PC-9 (cell line): ENCODE measurements at regions of chr1 and their contacts with region 1.

Region 1: GRCh38 chr1:217124408-217124807 is 401.2 kb upstream of the ESRRG start:
- DNase-seq: no peak
- H3K4me3 ChIP-seq: no peak overlapping the region
- H3K27ac ChIP-seq: no peak overlapping the region
- H3K4me1 ChIP-seq: no peaks in the 10 kb centered on the region
- H3K27me3 ChIP-seq: no peaks in the 10 kb centered on the region
- CTCF ChIP-seq: no peak

Region 2: DNA sequence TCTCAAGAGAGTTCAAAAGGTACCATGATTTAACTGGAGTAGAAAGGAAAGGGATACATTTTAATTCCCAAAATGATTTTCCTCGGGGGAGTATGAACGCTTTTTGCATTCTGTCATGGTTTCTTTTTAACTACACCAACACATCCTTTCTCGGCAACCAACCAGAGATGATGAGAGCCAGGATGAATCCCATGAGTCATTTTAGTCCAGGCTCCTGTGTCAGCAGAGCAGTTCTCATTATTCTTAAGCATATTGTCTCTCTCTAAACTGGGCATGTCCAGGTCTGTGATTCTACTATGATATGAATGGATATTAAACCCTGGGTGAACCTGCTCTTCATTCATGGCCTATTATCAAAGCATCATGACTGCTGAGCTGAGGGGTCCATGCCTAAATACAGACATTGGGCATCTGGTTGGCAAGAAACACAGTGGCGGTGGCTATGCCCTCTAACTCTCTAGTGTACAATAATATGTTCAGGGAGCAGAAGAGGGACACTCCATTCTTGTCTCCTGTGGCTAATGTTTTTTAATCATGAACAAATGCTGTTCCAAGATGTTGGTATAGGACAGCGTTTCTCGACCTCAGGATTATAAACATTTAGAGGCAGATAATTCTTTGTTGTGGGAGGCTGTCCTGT is 276.9 kb before region 1 on chr1:
- CTCF ChIA-PET with region 1: no interaction called
- POLR2A ChIA-PET with region 1: interaction called, 21 read pairs
- intact Hi-C with region 1: no loop called
- DNase-seq: no peak
- H3K4me3 ChIP-seq: no peak overlapping the region
- H3K27ac ChIP-seq: no peak overlapping the region
- H3K4me1 ChIP-seq: no peaks in the 10 kb centered on the region
- H3K27me3 ChIP-seq: no peaks in the 10 kb centered on the region
- CTCF ChIP-seq: no peak

Region 3: DNA sequence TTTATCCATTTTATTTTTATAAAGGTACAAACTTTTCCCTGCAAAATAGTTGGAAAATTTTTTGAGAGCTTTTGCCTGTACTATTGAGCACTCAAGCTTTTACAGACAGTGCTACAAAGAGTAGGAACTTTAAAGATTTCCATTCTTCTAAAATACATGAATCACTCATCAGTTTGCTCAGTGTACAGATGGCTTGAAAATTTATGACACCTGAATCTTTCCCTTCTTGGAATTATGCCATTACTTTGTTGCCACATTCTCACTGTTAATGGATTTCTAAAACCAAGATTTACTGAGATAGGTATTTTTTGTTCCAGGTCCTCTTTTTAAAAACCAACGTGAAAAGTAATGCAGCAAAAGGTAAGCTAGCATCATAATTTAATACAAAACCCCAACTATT is 430.4 kb after region 1 on chr1:
- CTCF ChIA-PET with region 1: no interaction called
- POLR2A ChIA-PET with region 1: no interaction called
- intact Hi-C with region 1: no loop called
- DNase-seq: no peak
- H3K4me3 ChIP-seq: no peak overlapping the region
- H3K27ac ChIP-seq: no peak overlapping the region
- H3K4me1 ChIP-seq: no peaks in the 10 kb centered on the region
- H3K27me3 ChIP-seq: no peaks in the 10 kb centered on the region
- CTCF ChIP-seq: no peak